Activated CD4-positive, alpha-beta T cell treated with anti-CD3 and anti-CD28 coated beads for 36 hours (primary cell): ENCODE measurements at regions of chr10 and their contacts with region 1.

Region 1: GRCh38 chr10:102503281-102504220 is at the start of gene SUFU:
- DNase-seq: peak; percentile 99
- ATAC-seq: peak; percentile 78
- H3K4me3 Mint-ChIP-seq: no peak within 1 kb of the TSS
- H3K27ac Mint-ChIP-seq: peak within 1 kb of the TSS; percentile 82
- H3K4me1 Mint-ChIP-seq: peaks cover 28% of the 10 kb centered on the region
- H3K27me3 Mint-ChIP-seq: no peaks in the 10 kb centered on the region
- total RNA-seq, gene SUFU: 8.4 to 9.5 TPM

Region 2: GRCh38 chr10:102055647-102056419 is 447.7 kb before region 1 on chr10 and contains the start of gene ARMH3:
- CTCF ChIA-PET with region 1: no interaction called
- POLR2A ChIA-PET with region 1: no interaction called
- intact Hi-C with region 1: loop called in 1 of 2 experiments (anchors 1 kb)
- DNase-seq: peak; percentile 96
- ATAC-seq: peak; percentile 98
- H3K4me3 Mint-ChIP-seq: peak within 1 kb of the TSS; percentile 95
- H3K27ac Mint-ChIP-seq: peak within 1 kb of the TSS; percentile 93
- H3K4me1 Mint-ChIP-seq: peaks cover 40% of the 10 kb centered on the region
- H3K27me3 Mint-ChIP-seq: no peaks in the 10 kb centered on the region
- total RNA-seq, gene ARMH3: 16.0 to 21.0 TPM

Region 3: DNA sequence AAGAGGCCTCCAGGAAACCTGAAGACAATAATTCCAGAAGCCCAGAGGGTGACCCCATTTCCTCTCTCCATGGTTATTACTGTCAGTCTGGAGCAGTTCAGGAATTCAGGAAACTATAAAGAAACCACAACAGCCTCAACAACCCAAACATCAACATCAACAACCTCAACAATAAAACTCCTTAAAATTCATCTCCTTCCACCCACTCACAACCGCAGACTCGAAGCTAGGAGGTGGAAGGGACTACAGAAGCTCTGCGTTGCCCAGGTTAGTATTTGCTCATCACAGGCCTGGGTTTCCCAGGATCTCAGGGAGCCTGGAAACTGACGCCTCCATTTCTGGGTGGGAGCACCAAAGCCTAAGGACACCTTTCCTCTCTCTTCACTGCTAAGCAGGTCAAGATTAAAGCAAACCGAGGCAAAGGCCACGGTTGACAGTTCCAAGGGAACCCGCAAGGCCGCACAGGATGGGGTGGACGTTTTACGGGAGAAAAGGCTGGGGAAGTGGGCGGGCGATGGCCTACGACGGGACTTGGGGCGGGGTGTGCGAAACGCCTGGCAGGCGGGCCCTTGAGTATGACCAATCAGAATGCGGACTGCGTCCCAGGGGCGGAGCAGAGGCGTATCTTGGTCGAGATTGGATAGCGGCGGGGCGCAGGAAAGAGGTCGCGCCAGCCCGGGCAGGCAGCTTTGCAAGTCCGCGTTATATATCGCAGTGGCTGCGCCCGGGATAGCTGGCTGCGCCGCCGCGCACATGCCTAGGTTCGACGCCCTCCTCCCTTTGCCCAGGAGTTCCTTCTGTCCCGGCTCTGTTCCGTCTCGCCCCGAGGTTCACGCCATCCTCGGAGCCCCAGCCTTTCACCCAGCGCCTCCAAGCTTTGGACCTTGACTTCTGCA is 277.7 kb before region 1 on chr10 and contains the start of gene ELOVL3:
- CTCF ChIA-PET with region 1: interaction called, 7 read pairs
- POLR2A ChIA-PET with region 1: no interaction called
- intact Hi-C with region 1: loop called in 1 of 2 experiments (anchors 1 kb)
- DNase-seq: peak; percentile 91
- ATAC-seq: peak; percentile 91
- H3K4me3 Mint-ChIP-seq: peak within 1 kb of the TSS; percentile 38
- H3K27ac Mint-ChIP-seq: no peak within 1 kb of the TSS
- H3K4me1 Mint-ChIP-seq: peaks cover 24% of the 10 kb centered on the region
- H3K27me3 Mint-ChIP-seq: peaks cover 39% of the 10 kb centered on the region
- total RNA-seq, gene ELOVL3: 0.14 TPM in 1 of 2 experiments, not detected in the other

Region 4: GRCh38 chr10:102420810-102421644 is 82.5 kb before region 1 on chr10 and contains the start of gene FBXL15:
- CTCF ChIA-PET with region 1: interaction called, 4 read pairs
- POLR2A ChIA-PET with region 1: interaction called, 3 read pairs
- intact Hi-C with region 1: loop called (anchors 1 to 2 kb)
- DNase-seq: peak; percentile 98
- ATAC-seq: peak; percentile 80
- H3K4me3 Mint-ChIP-seq: peak within 1 kb of the TSS; percentile 96
- H3K27ac Mint-ChIP-seq: peak within 1 kb of the TSS; percentile 87
- H3K4me1 Mint-ChIP-seq: peaks cover 30% of the 10 kb centered on the region
- H3K27me3 Mint-ChIP-seq: peaks cover 14% of the 10 kb centered on the region
- total RNA-seq, gene FBXL15: 5.4 to 11.9 TPM

Region 5: GRCh38 chr10:102583435-102584417 is 80.2 kb after region 1 on chr10:
- CTCF ChIA-PET with region 1: interaction called, 105 read pairs
- POLR2A ChIA-PET with region 1: interaction called, 5 read pairs
- intact Hi-C with region 1: loop called (anchors 1 kb)
- DNase-seq: peak; percentile 91
- ATAC-seq: peak; percentile 100
- H3K4me3 Mint-ChIP-seq: no peak overlapping the region
- H3K27ac Mint-ChIP-seq: no peak overlapping the region
- H3K4me1 Mint-ChIP-seq: peaks cover 9% of the 10 kb centered on the region
- H3K27me3 Mint-ChIP-seq: no peaks in the 10 kb centered on the region

Region 6: DNA sequence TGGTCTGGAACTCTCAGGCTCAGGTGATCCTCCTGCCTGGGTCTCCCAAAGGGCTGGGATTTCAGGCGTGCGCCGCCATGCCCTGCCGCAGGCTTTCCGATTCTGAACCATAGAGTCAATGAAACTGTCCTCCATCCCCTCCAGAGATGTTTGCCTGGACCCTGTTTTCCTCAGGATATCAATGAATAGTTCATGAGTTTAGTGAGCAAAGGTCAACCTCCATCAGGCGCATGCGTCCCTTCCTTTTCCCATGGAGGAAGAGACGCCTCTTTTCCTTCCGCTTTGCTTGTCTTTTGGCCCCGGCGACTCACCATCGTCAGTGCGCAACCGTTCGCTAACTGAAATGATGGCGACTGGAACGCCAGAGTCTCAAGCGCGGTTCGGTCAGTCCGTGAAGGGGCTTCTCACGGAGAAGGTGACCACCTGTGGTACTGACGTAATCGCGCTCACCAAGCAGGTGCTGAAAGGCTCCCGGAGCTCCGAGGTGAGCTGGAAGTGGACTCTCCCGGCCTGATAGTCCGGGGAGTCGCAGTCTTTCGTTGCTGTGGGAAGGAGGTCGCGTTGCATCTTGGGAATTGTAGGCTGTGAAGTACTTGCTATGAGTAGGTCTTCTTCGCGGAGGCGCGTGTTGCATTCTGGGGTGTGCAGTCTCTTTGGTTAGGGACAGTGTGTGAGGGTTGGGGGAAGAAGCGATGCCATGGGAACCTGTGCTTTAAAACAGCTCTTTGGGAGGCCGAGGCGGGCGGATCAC is 350.6 kb after region 1 on chr10 and contains the start of gene BORCS7:
- CTCF ChIA-PET with region 1: no interaction called
- POLR2A ChIA-PET with region 1: no interaction called
- intact Hi-C with region 1: loop called in 1 of 2 experiments (anchors 1 kb)
- DNase-seq: peak; percentile 94
- ATAC-seq: peak; percentile 100
- H3K4me3 Mint-ChIP-seq: peak within 1 kb of the TSS; percentile 95
- H3K27ac Mint-ChIP-seq: peak within 1 kb of the TSS; percentile 99
- H3K4me1 Mint-ChIP-seq: peaks cover 14% of the 10 kb centered on the region
- H3K27me3 Mint-ChIP-seq: no peaks in the 10 kb centered on the region
- total RNA-seq, gene BORCS7: 4.5 to 5.1 TPM

Region 7: DNA sequence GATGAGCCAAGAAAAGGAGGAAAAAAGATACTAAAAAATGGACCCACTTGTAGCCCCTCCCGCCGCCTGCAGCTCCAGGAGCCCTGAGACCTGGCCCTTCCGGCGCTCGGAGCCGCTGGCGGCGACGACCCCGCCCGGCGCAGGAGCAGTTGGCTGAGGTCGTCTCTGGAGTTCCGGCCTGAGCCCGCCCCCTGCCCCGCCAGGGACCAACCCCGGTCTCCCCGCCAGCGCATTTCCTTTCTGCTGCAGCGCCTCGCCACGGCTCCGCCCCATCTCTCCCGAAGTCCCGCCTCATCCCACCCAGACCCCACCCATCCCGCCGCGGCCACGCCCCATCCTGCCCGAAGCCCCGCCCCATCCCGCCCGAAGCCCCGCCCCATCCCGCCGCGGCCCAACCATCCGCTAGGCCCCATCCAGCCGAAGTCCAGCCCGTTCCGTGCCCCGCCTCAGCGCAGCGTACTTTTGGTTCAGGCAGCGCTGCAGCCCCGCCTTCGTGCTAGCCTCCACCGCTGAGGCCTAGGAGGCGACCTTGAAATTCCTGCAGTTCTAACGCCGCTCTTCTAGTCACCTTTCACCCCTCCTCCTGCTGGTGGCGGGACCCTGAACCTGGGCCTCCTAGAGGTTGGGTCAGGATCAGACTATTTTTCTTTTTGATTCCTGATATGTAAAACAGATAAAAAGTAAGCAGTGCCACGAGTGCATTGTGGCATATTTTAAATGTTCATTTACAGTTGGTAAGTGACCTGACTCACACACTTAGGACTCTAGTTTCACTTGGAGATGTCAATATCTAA is 1414.7 kb after region 1 on chr10 and contains the start of gene STN1:
- CTCF ChIA-PET with region 1: no interaction called
- POLR2A ChIA-PET with region 1: no interaction called
- intact Hi-C with region 1: loop called in 1 of 2 experiments (anchors 5 kb)
- DNase-seq: peak; percentile 98
- ATAC-seq: peak; percentile 93
- H3K4me3 Mint-ChIP-seq: peak within 1 kb of the TSS; percentile 96
- H3K27ac Mint-ChIP-seq: peak within 1 kb of the TSS; percentile 99
- H3K4me1 Mint-ChIP-seq: peaks cover 32% of the 10 kb centered on the region
- H3K27me3 Mint-ChIP-seq: no peaks in the 10 kb centered on the region
- total RNA-seq, gene STN1: 34.4 to 37.4 TPM